Activated CD4-positive, alpha-beta memory T cell treated with anti-CD3 and anti-CD28 coated beads for 36 hours (primary cell): ENCODE measurements at regions of chr1 and their contacts with region 1.

Region 1: DNA sequence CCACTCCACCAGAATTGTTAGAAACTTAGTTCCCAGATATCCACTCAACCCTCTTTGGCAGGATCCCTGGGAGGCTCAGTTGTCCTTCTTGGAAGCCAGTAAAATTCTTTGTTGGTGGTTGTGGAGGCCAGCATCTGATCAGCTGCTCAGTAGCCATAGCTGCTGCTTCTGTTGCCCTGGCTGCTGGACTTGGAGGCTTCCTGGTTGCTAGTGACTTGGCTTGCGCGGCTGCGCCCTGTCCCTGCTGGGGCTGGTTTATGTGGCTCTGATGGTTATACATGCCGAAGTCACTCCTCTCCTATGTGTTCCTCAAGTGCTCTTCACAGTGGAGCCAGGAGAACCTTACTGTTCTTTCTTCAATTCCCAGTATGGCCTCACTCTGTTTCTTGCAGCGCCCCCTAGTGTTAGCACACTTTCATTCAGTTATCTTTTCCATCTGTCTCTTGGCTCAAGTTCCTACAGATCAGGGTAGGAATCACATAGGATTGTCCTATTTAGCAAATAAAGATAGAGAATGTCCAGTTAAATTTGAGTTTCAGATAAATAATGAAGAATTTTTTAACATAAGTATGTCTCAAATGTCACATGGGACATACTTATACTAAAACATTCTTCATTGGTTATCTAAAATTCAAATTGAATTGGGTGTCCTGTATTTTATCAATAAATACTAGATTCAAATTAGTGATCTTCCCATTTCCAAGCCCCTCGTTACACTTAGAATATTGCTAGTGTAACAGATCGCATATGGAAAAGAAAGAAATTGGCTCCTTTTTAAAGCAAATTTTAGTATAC is 176.4 kb downstream of the TGFB2 start:
- DNase-seq: peak; percentile 50
- H3K4me3 Mint-ChIP-seq: no peak overlapping the region
- H3K27ac Mint-ChIP-seq: no peak overlapping the region
- H3K4me1 Mint-ChIP-seq: no peaks in the 10 kb centered on the region
- H3K27me3 Mint-ChIP-seq: peaks cover 11% of the 10 kb centered on the region

Region 2: DNA sequence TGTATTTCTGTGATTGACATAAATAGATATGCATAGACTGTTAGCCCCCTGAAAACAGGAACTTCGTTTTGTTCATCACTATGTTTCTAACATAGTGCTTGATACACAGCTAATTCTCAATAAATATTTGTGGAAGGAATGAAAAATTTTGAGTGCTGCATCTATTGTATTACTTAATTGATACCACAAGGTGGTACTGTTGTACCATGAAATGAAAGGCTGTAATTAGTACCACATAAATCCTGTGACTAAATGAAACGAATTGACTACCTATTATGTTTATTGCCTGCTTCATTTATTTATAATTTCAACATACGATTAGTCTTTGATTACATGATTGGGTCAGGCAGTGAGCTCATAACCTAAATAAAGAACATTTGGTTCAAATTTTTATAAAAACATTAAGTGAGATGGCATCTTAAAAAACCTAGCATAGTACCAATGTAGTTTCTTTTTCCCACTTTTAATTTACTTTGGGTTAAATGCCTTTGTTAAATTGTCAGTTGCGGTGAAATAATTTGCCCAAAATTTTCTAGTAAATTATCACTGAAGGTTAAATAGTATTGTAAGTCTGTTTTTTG is 191.4 kb before region 1 on chr1:
- CTCF ChIA-PET with region 1: interaction called, 9 read pairs
- POLR2A ChIA-PET with region 1: no interaction called
- intact Hi-C with region 1: loop called (anchors 1 kb)
- DNase-seq: no peak
- H3K4me3 Mint-ChIP-seq: no peak overlapping the region
- H3K27ac Mint-ChIP-seq: no peak overlapping the region
- H3K4me1 Mint-ChIP-seq: no peaks in the 10 kb centered on the region
- H3K27me3 Mint-ChIP-seq: no peaks in the 10 kb centered on the region

Region 3: GRCh38 chr1:218339267-218339831 is 182.2 kb before region 1 on chr1:
- CTCF ChIA-PET with region 1: interaction called, 13 read pairs
- POLR2A ChIA-PET with region 1: no interaction called
- intact Hi-C with region 1: loop called (anchors 1 kb)
- DNase-seq: no peak
- H3K4me3 Mint-ChIP-seq: no peak overlapping the region
- H3K27ac Mint-ChIP-seq: no peak overlapping the region
- H3K4me1 Mint-ChIP-seq: no peaks in the 10 kb centered on the region
- H3K27me3 Mint-ChIP-seq: peaks cover 1% of the 10 kb centered on the region

Region 4: GRCh38 chr1:218371927-218372672 is 149.5 kb before region 1 on chr1:
- CTCF ChIA-PET with region 1: no interaction called
- POLR2A ChIA-PET with region 1: no interaction called
- intact Hi-C with region 1: no loop called
- DNase-seq: no peak
- H3K4me3 Mint-ChIP-seq: no peak overlapping the region
- H3K27ac Mint-ChIP-seq: no peak overlapping the region
- H3K4me1 Mint-ChIP-seq: peaks cover 5% of the 10 kb centered on the region
- H3K27me3 Mint-ChIP-seq: peaks cover 44% of the 10 kb centered on the region